ENCODE measurements at regions of chr12 and their contacts with region 1.

Region 1: DNA sequence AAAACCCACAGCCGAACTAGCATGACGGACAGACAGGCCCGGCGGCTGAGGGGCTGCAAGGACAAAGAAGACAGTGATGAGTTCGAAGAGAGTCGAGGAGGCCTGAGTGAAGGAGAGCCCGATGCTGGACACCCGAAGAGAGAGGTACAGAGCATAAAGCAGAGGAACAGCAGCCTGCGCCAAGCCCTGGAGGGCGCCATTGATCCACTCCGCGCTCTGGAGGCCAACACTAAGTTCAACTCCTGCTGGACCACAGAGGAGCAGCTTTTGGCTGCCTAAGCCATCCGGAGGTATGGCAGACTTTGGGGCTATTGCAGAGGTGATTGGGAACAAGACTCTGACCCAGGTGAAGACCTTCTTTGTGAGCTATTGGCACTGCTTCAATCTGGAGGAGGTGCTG is 7.8 kb upstream of the PLXNC1 start:
- DNase-seq: no peak
- ATAC-seq: no peak

Region 2: GRCh38 chr12:94434171-94434570 is 293.6 kb after region 1 on chr12:
- intact Hi-C with region 1: loop called (anchors 5 kb)
- DNase-seq: no peak
- ATAC-seq: no peak

Measured in Right ventricle myocardium superior (tissue), 1 donor.